GM12878 (cell line): ENCODE measurements at regions of chr1 and their contacts with region 1.

Region 1: DNA sequence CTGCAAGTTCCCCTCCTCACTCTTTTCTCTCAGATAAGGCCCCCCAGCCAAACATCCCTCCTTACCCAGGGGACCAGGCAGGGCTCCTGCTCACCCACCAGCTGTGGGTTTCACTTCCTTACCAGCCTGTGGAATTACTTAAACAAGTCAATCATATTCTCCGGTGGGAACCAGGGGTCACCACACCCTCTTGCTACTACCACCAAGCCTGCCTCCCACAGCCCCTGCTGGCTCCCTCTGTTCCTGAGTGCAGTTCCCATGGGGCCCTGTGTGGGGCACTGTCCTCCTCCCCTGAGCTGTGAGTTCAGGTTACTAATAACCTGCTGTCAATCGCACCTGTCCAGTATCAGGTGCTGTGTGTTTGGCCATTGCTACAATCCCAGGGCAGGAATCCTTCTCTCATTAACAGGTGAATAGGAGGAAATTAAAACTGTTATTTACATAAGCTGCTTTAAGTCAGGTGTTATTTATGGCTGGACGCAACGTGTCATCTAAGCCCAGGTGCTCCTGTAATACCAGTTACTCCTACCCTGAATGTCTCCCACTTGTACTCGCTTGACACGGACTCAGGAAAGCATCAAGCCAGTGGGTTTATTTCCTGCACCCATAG is 53.1 kb upstream of the LBR start:
- DNase-seq: no peak
- ATAC-seq: peak; percentile 88
- H3K4me3 ChIP-seq: no peak overlapping the region
- H3K27ac ChIP-seq: no peak overlapping the region
- H3K4me1 ChIP-seq: peaks cover 32% of the 10 kb centered on the region
- H3K27me3 ChIP-seq: 0 out of 4 replicates have a peak, but pooled peaks cover 0 to 2% of the 10 kb centered on the region in 2 experiments
- CTCF ChIP-seq: peak; percentile 58 to 95 (median 94)
- EP300 ChIP-seq: no peak
- POLR2A ChIP-seq: no peak
- RAD21 ChIP-seq: peak; percentile 63

Region 2: GRCh38 chr1:225493591-225494246 is 12.8 kb after region 1 on chr1:
- CTCF ChIA-PET with region 1: interaction called, 10 read pairs
- POLR2A ChIA-PET with region 1: no interaction called
- RAD21 ChIA-PET with region 1: no interaction called
- SMC1A ChIA-PET with region 1: interaction called, 4 read pairs
- in situ Hi-C with region 1: no loop called
- intact Hi-C with region 1: no loop called
- DNase-seq: no peak
- ATAC-seq: no peak
- H3K4me3 ChIP-seq: no peak overlapping the region
- H3K27ac ChIP-seq: no peak overlapping the region
- H3K4me1 ChIP-seq: no peaks in the 10 kb centered on the region
- H3K27me3 ChIP-seq: no peaks in the 10 kb centered on the region
- CTCF ChIP-seq: no peak
- EP300 ChIP-seq: no peak
- POLR2A ChIP-seq: no peak
- RAD21 ChIP-seq: no peak